ENCODE measurements at regions of chr21 and their contacts with region 1.

Region 1: GRCh38 chr21:32096411-32096810 is 182.4 kb downstream of the MIS18A start:
- DNase-seq: peak; percentile 34
- ATAC-seq: peak; percentile 51 to 64

Region 2: DNA sequence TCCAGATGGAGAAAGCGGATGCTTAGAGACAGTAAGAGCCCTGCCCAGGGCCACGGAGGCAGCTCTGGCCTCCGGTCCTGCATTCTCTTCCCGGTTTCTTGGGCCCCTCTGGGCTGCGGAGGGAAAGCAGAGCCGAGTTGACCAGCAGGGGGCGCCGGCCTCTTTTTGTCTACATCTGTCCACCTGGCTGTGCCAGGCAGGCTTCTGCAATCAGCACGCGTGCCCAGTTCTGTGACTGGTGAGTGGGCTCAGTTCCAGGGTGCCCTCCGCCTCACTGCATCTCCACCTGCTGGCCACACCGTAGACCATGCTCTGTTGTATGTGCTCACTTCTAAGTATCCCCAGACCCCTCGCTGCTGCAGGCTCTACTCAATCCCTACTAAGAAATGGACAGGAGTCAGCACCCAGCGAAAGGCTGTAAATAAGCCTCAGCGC is 230.3 kb before region 1 on chr21:
- intact Hi-C with region 1: loop called in 1 of 2 experiments (anchors 10 kb)
- DNase-seq: peak; percentile 89
- ATAC-seq: peak; percentile 97 to 98

Region 3: GRCh38 chr21:32021319-32021994 is 75.0 kb before region 1 on chr21:
- intact Hi-C with region 1: loop called in 1 of 2 experiments (anchors 5 kb)
- DNase-seq: peak; percentile 78
- ATAC-seq: peak; percentile 94 to 95

Region 4: GRCh38 chr21:32131960-32132359 is 35.5 kb after region 1 on chr21:
- intact Hi-C with region 1: loop called in 1 of 2 experiments (anchors 5 kb)
- DNase-seq: no peak
- ATAC-seq: peak; percentile 87 to 89

Region 5: GRCh38 chr21:32162727-32163320 is 66.4 kb after region 1 on chr21:
- intact Hi-C with region 1: no loop called
- DNase-seq: no peak
- ATAC-seq: no peak